Activated B cell treated with CpG ODN at 0.5 μM for 24 hours (primary cell): ENCODE measurements at regions of chr19 and their contacts with region 1.

Region 1: DNA sequence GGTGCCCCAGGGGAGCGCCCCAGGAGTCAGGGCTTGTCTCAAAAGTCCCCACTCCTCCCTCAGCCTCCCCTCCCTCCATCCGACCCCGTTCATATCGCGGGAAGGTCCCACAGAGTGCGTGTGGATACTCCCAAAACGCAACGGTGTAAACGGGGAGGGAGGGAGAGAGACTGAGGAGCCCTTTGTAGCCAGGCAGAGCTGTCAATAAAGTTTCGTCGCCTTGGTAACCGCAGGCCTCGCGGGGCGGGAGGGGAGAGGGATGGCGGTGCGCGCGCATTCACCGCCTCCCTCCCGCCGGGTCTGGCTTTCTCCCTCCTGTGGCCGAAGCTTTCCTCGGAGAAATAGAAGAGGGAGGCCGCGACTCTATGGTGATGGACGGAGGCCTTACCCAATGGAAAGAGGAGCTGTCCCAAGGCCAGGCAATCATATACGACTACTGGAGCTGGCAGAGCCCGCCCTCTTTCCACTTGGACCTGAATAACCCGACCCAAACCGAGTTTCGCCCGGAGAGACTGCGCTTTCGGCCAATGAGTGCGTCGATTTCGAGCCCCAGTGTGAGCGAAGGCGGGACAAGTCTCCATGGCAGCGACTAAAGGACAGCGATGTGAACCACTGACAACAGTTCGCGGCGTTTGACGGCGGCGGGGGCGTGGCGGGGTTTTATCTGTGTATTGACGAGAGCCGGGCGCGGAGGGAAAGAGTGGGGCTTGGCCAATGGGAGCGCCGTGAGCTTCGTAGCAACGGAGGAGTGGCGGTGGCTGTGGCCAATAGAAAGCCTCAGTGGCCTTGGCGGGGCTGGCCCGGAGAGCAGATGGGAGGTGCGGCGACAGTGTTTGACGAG is at the start of gene KMT5C:
- DNase-seq: peak; percentile 99
- ATAC-seq: peak; percentile 81
- H3K4me3 Mint-ChIP-seq: peak within 1 kb of the TSS; percentile 95
- H3K27ac Mint-ChIP-seq: peak within 1 kb of the TSS; percentile 90
- H3K4me1 Mint-ChIP-seq: peaks cover 31% of the 10 kb centered on the region
- H3K27me3 Mint-ChIP-seq: peaks cover 7% of the 10 kb centered on the region
- CTCF ChIP-seq: no peak
- total RNA-seq, gene KMT5C: 7.2 and 8.1 TPM in 2 replicates

Region 2: DNA sequence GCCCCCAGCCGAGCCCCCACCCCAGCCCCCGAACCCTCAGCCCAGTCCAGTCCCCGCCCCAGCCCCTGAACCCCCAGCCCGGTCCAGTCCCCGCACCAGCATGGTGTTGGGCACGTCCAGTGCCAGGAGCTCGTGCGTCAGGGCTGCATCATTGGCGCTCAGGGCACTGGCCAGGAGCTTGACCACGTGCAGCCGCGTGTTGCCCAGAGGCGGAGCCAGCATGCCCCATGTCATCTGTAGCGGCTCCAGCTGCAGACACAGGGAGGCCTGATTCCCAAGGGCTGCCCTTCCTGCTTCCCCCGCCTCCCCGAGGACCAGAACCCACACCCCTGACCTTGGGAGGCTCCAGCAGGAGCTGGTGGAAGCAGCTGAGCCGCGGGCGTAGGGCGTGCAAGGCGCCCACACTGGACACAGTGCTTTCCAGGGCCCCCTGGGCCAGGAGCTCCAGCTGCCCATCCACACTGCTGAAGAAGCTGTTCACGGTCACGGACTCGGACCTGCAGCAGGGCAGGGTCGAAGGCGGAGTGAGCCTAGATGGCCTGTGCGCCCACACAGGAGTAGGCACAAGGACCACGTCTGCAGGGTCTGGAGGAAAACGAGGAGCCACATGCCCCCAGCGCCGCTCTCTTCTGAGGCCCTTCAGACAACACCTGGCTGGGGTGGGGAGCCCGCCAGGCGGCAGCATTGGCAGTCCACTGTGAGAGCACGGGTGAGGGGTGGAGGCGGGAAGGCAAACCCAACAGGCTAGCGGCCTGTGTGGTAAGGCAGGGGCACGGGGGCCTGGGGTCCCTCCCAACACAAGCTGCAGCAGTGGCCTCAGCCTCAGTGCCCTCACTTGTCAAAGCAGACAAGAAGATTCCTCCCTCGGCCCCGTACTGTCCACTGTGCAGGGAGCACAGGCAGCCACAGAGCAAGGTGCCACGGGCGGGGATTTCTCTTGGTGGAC is 97.9 kb before region 1 on chr19:
- CTCF ChIA-PET with region 1: no interaction called
- POLR2A ChIA-PET with region 1: no interaction called
- intact Hi-C with region 1: no loop called
- DNase-seq: no peak
- ATAC-seq: no peak
- H3K4me3 Mint-ChIP-seq: no peak overlapping the region
- H3K27ac Mint-ChIP-seq: no peak overlapping the region
- H3K4me1 Mint-ChIP-seq: peaks cover 3% of the 10 kb centered on the region
- H3K27me3 Mint-ChIP-seq: no peaks in the 10 kb centered on the region
- CTCF ChIP-seq: no peak

Region 3: GRCh38 chr19:55279770-55280643 is 59.3 kb before region 1 on chr19 and contains the start of gene HSPBP1:
- CTCF ChIA-PET with region 1: no interaction called
- POLR2A ChIA-PET with region 1: interaction called, 19 read pairs
- intact Hi-C with region 1: loop called (anchors 1 kb)
- DNase-seq: peak; percentile 97
- ATAC-seq: peak; percentile 83
- H3K4me3 Mint-ChIP-seq: peak within 1 kb of the TSS; percentile 100
- H3K27ac Mint-ChIP-seq: peak within 1 kb of the TSS; percentile 98
- H3K4me1 Mint-ChIP-seq: peaks cover 73% of the 10 kb centered on the region
- H3K27me3 Mint-ChIP-seq: peaks cover 4% of the 10 kb centered on the region
- CTCF ChIP-seq: no peak
- total RNA-seq, gene HSPBP1: 32.2 and 32.9 TPM in 2 replicates

Region 4: DNA sequence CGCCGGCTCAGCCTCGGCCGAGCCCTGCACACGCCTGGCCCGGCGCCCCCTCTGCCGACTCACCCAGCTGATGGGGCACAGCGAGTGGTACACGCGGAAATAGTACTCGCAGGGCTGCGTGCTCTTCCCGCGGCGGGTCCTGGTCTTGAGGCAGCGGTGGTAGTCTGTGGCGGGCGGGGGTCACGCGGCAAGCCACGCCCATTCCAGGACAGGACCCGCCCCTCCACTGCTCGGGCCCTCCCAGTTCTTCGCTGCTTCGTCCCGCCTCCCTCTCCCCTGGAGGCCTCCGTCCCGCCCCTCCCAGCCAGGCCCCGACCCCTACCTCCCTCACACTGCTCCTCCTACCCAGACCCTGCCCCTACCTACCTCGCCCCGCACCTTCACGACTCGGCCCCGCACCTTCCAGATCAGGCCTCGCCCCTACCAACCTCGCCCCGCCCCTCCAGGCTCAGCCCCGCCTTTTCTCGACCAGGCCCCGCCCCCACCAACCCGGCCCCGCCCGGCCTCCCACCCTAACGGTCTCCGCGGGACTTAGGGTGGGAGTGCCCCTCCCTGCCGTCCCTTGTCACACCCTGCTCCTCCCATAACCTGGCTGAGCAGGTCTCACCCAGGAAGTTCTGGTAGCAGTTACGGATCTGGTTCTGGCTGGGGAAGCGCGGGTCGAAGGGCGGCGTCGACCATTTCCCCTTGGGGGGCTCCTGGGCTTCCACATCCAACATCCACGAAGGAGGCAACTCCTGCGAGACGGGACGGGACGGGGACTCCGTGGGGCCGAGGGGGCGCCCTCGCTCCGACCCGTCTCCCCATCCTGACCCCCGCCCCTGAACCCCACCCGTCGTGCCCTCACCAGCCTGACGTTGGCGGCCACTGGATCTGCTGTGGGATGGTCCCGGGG is 14.8 kb after region 1 on chr19:
- CTCF ChIA-PET with region 1: no interaction called
- POLR2A ChIA-PET with region 1: interaction called, 5 read pairs
- intact Hi-C with region 1: loop called (anchors 1 kb)
- DNase-seq: peak; percentile 66
- ATAC-seq: peak; percentile 93
- H3K4me3 Mint-ChIP-seq: peak overlapping the region; percentile 79
- H3K27ac Mint-ChIP-seq: no peak overlapping the region
- H3K4me1 Mint-ChIP-seq: peaks cover 18% of the 10 kb centered on the region
- H3K27me3 Mint-ChIP-seq: peaks cover 50% of the 10 kb centered on the region
- CTCF ChIP-seq: no peak

Region 5: DNA sequence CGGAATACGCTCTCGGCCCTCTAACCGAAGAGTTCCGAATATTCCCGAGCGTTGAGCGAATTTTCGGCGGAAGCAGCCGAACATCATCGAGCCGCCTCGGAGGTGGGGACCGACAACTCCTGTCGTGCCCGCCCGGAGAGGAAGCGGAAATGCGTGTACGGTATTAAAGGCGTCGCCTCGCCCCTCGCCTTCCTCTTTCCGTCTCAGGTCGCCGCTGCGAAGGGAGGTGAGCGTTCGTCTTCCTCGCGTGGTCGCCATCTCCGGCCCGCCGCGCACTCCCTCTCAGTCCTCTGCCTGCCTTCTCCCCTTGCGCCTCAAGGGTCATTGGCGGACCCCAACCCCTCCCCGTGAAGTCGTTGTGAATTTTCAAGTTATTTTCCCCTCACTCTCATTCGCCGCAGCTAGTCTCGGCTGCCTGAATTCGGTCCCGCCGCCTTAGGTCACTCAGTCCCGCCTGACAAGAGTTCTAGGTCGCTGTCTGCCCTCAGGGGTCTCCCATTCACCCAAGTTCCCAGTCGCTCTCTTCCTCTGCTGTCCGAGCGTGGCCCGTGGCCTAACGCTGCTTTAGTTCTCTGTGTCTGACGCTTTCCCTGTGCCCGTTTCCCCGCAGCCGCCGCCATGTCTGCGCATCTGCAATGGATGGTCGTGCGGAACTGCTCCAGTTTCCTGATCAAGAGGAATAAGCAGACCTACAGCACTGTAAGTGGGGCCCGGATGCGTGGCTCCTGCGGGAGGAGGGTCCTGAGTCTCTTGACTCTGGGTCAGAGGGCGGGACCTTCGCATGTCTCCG is 46.7 kb after region 1 on chr19 and contains the start of gene RPL28:
- CTCF ChIA-PET with region 1: interaction called, 7 read pairs
- POLR2A ChIA-PET with region 1: interaction called, 28 read pairs
- intact Hi-C with region 1: loop called (anchors 1 kb)
- DNase-seq: peak; percentile 95
- ATAC-seq: peak; percentile 79
- H3K4me3 Mint-ChIP-seq: peak within 1 kb of the TSS; percentile 100
- H3K27ac Mint-ChIP-seq: peak within 1 kb of the TSS; percentile 99
- H3K4me1 Mint-ChIP-seq: peaks cover 67% of the 10 kb centered on the region
- H3K27me3 Mint-ChIP-seq: no peaks in the 10 kb centered on the region
- CTCF ChIP-seq: no peak
- total RNA-seq, gene RPL28: 3,790 and 4,042 TPM in 2 replicates

Region 6: DNA sequence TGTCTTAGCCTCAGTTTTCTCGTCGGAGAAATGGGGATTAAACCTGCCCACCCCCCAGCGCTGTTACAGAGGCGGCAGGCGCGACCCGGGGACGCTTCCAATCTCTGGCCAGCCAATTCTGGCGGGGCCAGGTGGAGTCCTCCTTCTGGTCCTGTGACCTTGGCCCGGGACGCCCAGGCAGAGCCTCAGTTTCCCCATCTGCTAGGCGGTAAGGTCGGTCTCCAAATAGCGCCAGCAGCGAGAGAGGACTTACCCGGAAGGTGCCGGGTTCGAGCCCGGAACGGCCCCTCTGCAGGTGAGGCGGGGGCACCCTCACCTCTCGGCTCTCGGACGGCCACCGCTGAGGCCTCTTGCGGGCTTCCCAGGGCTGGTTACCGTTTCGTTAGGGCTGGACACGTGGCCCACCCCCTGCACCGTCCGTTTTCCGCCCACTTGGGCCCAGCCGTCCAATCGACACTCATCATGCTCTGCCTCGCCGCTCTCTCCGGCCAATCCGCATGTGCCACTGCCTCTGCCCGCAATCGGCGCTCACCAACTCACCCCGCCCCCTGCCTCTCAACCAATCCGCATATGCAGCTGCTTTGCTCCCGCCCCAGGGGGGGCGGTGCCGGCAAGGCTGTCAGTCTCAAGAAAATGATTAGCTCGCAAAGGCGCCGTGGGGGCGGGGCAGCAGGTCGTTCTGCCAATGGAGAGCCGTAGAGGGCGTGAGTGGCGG is 122.1 kb after region 1 on chr19 and contains the start of gene ISOC2:
- CTCF ChIA-PET with region 1: no interaction called
- POLR2A ChIA-PET with region 1: interaction called, 5 read pairs
- intact Hi-C with region 1: loop called (anchors 1 kb)
- DNase-seq: peak; percentile 100
- ATAC-seq: peak; percentile 96
- H3K4me3 Mint-ChIP-seq: peak within 1 kb of the TSS; percentile 89
- H3K27ac Mint-ChIP-seq: peak within 1 kb of the TSS; percentile 82
- H3K4me1 Mint-ChIP-seq: peaks cover 22% of the 10 kb centered on the region
- H3K27me3 Mint-ChIP-seq: no peaks in the 10 kb centered on the region
- CTCF ChIP-seq: no peak
- total RNA-seq, gene ISOC2: 28.7 and 29.0 TPM in 2 replicates